Activated T-helper 2 cell treated with anti-CD3 and anti-CD28 coated beads, Interferon-gamma antibody, Interleukin-2, Interleukin-4, amounts not matched to agents 10 μg/mL and 5 μg/mL and 100 μg/mL, durations not matched to agents 14 hours and 24 hours and 36 hours (primary cell): ENCODE measurements at regions of chr3 and their contacts with region 1.

Region 1: GRCh38 chr3:127970966-127971592 is 56.0 kb downstream of the KBTBD12 start:
- DNase-seq: no peak
- H3K4me3 Mint-ChIP-seq: no peak overlapping the region
- H3K27ac Mint-ChIP-seq: no peak overlapping the region
- H3K4me1 Mint-ChIP-seq: no peaks in the 10 kb centered on the region
- H3K27me3 Mint-ChIP-seq: peaks cover 46% of the 10 kb centered on the region

Region 2: GRCh38 chr3:127652231-127652995 is 318.7 kb before region 1 on chr3:
- intact Hi-C with region 1: loop called (anchors 1 kb)
- DNase-seq: no peak
- H3K4me3 Mint-ChIP-seq: no peak overlapping the region
- H3K27ac Mint-ChIP-seq: no peak overlapping the region
- H3K4me1 Mint-ChIP-seq: no peaks in the 10 kb centered on the region
- H3K27me3 Mint-ChIP-seq: peaks cover 6% of the 10 kb centered on the region

Region 3: DNA sequence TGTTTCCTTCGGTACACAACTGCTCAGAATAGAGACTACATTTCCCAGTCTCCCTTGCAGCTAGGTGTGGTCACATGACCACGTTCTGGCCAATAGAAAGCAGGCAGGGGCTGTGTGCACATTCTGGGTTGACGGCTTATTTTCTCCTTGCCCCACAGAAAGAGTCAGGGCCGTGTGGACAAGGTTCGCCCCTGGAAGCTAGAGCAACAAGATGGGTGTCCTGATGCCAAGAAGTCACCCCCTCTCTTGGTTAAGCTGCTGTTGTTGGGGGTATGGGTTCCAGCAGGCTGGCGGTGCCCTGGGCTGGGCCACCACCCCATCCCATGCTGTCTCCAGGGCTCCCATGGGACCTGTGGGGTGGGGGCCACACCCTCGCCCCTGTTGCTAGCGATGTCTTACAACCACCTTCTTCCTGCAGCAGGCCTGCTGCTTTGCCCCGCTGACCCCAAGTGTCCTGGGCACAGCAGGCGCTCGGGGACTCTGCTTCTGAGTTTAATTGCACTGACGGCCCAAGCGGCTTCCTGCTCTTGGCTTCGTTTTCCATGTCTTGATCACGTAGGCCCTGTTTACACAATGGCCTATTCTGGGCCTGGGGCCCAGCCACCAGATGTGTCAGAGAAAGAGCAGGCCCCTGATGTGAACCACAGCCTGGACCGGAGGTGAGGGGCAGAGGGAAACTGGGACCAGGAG is 273.4 kb before region 1 on chr3:
- intact Hi-C with region 1: loop called (anchors 5 kb)
- DNase-seq: peak; percentile 38
- H3K4me3 Mint-ChIP-seq: no peak overlapping the region
- H3K27ac Mint-ChIP-seq: no peak overlapping the region
- H3K4me1 Mint-ChIP-seq: no peaks in the 10 kb centered on the region
- H3K27me3 Mint-ChIP-seq: no peaks in the 10 kb centered on the region